Naive thymus-derived CD4-positive, alpha-beta T cell (primary cell): ENCODE measurements at regions of chr18 and their contacts with region 1.

Region 1: GRCh38 chr18:67318651-67319050 is 197.9 kb downstream of the DSEL start:
- DNase-seq: no peak
- ATAC-seq: no peak
- H3K4me3 ChIP-seq: no peak overlapping the region
- H3K4me3 Mint-ChIP-seq: no peak overlapping the region
- H3K27ac ChIP-seq: no peak overlapping the region
- H3K27ac Mint-ChIP-seq: no peak overlapping the region
- H3K4me1 ChIP-seq: no peaks in the 10 kb centered on the region
- H3K4me1 Mint-ChIP-seq: peaks cover 0 to 3% (median 0%) of the 10 kb centered on the region in 7 donors
- H3K27me3 ChIP-seq: no peaks in the 10 kb centered on the region
- H3K27me3 Mint-ChIP-seq: no peaks in the 10 kb centered on the region

Region 2: GRCh38 chr18:66646622-66647021 is 672.0 kb before region 1 on chr18:
- CTCF ChIA-PET with region 1: no interaction called
- POLR2A ChIA-PET with region 1: no interaction called
- intact Hi-C with region 1: no loop called
- DNase-seq: no peak
- ATAC-seq: no peak
- H3K4me3 ChIP-seq: no peak overlapping the region
- H3K4me3 Mint-ChIP-seq: no peak overlapping the region
- H3K27ac ChIP-seq: no peak overlapping the region
- H3K27ac Mint-ChIP-seq: no peak overlapping the region
- H3K4me1 ChIP-seq: no peaks in the 10 kb centered on the region
- H3K4me1 Mint-ChIP-seq: no peaks in the 10 kb centered on the region
- H3K27me3 ChIP-seq: no peaks in the 10 kb centered on the region
- H3K27me3 Mint-ChIP-seq: no peaks in the 10 kb centered on the region

Region 3: DNA sequence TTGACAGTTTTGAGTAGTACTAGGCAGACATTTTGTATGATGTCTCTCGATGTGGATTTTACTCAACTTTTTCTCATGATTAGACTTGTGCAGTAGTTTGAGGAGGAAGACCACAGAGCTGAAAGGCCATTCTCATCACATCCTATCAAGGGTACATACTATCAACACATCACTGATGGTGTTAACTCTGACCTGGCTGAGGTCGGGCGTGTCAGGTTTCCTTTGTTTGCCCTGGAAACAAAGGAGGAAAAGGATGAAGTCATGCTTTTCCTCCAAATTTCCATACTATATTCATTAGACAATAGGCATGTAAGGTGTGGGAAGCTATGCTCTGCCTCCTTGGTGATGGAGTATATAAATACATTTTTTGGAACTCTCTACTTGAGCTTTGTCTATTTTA is 13.2 kb before region 1 on chr18:
- CTCF ChIA-PET with region 1: no interaction called
- POLR2A ChIA-PET with region 1: no interaction called
- intact Hi-C with region 1: no loop called
- DNase-seq: no peak
- ATAC-seq: no peak
- H3K4me3 ChIP-seq: no peak overlapping the region
- H3K4me3 Mint-ChIP-seq: no peak overlapping the region
- H3K27ac ChIP-seq: no peak overlapping the region
- H3K27ac Mint-ChIP-seq: no peak overlapping the region
- H3K4me1 ChIP-seq: peaks cover 0 to 4% of the 10 kb centered on the region in 2 donors
- H3K4me1 Mint-ChIP-seq: peaks cover 3 to 19% (median 12%) of the 10 kb centered on the region in 7 donors
- H3K27me3 ChIP-seq: no peaks in the 10 kb centered on the region
- H3K27me3 Mint-ChIP-seq: peaks cover 0 to 3% (median 0%) of the 10 kb centered on the region in 5 donors

Region 4: DNA sequence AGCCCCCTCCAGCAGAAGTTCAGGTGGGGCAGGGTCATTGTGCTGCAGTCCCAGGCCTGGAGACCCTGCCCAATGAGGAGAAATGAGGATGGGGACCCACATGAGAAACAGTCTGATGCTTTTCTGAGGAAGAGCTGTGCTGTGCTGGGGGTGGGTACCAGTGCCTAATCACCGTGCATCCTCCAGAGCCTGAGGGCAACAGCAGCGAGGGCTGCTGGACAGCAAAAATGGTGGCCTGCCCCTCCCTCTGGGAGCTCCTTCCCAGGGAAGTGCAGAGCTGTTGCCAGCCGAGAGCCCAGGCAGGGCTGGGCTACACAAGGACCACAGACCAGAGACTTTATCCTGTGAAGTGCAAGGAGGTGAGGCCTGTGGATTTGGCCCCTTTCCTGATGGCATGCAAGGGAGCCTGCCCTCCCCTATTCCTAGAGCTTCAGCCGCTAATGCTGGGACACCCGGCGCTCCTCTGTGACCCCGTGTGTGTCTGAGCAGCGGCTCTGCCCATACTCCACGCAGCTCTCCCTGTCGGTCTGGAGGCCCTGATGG is 63.0 kb after region 1 on chr18:
- CTCF ChIA-PET with region 1: no interaction called
- POLR2A ChIA-PET with region 1: no interaction called
- intact Hi-C with region 1: no loop called
- DNase-seq: no peak
- ATAC-seq: no peak
- H3K4me3 ChIP-seq: no peak overlapping the region
- H3K4me3 Mint-ChIP-seq: no peak overlapping the region
- H3K27ac ChIP-seq: no peak overlapping the region
- H3K27ac Mint-ChIP-seq: no peak overlapping the region
- H3K4me1 ChIP-seq: no peaks in the 10 kb centered on the region
- H3K4me1 Mint-ChIP-seq: peaks cover 0 to 2% (median 0%) of the 10 kb centered on the region in 7 donors
- H3K27me3 ChIP-seq: no peaks in the 10 kb centered on the region
- H3K27me3 Mint-ChIP-seq: peaks cover 0 to 4% (median 0%) of the 10 kb centered on the region in 5 donors

Region 5: DNA sequence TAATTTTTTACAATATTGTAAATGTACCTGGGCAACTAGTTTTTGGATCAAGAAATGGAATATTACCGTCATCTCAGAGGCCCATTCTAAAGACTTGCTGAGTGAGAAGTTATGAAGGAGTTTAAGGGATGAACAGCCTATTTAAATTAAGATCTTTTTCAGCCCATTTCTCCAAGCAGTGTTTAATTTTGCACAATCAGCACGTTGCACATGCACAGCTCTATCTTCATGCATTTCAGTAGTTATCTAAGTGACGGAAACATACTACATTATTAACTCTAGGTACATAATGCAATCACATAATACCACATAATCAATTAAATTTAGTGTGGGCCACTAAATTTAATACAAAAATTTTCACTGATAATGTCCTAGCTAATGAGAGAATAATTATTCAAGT is 780.0 kb after region 1 on chr18:
- CTCF ChIA-PET with region 1: no interaction called
- POLR2A ChIA-PET with region 1: no interaction called
- intact Hi-C with region 1: loop called in 1 of 2 experiments (anchors 10 kb)
- DNase-seq: no peak
- ATAC-seq: no peak
- H3K4me3 ChIP-seq: no peak overlapping the region
- H3K4me3 Mint-ChIP-seq: no peak overlapping the region
- H3K27ac ChIP-seq: no peak overlapping the region
- H3K27ac Mint-ChIP-seq: no peak overlapping the region
- H3K4me1 ChIP-seq: no peaks in the 10 kb centered on the region
- H3K4me1 Mint-ChIP-seq: no peaks in the 10 kb centered on the region
- H3K27me3 ChIP-seq: no peaks in the 10 kb centered on the region
- H3K27me3 Mint-ChIP-seq: no peaks in the 10 kb centered on the region